Activated CD4-positive, alpha-beta T cell treated with anti-CD3 and anti-CD28 coated beads, Interleukin-2, amount 10 ng/mL, durations not matched to agents 24 days and 14 days (primary cell): ENCODE measurements at regions of chr21 and their contacts with region 1.

Region 1: GRCh38 chr21:45643021-45643980 is at the start of gene PCBP3:
- DNase-seq: peak; percentile 98
- H3K4me3 Mint-ChIP-seq: peak within 1 kb of the TSS; percentile 82
- H3K27ac Mint-ChIP-seq: peak within 1 kb of the TSS; percentile 64
- H3K4me1 Mint-ChIP-seq: peaks cover 16% of the 10 kb centered on the region
- H3K27me3 Mint-ChIP-seq: peaks cover 11% of the 10 kb centered on the region
- total RNA-seq, gene PCBP3: 7.5 and 9.7 TPM in 2 replicates

Region 2: DNA sequence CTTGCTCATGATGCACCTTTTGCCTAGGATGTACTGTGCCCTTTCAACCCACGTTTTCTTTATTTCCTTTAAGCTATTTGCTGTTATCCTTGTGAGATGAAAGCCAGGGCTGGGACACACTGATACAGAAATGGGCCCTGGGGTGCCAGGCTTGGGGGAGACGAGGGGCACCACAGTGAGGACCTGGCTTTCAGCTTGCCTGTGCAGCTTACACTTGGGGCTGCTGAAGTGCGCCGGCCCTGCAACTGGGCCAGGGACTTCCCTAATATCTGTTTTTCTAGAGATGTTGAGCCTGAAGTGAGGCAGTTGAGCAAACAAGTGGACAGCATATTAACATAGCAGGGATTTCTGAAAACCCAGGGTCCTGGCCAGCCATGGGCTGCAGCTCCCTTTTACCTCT is 58.5 kb before region 1 on chr21:
- intact Hi-C with region 1: no loop called
- DNase-seq: no peak
- H3K4me3 Mint-ChIP-seq: no peak overlapping the region
- H3K27ac Mint-ChIP-seq: no peak overlapping the region
- H3K4me1 Mint-ChIP-seq: no peaks in the 10 kb centered on the region
- H3K27me3 Mint-ChIP-seq: peaks cover 25% of the 10 kb centered on the region

Region 3: DNA sequence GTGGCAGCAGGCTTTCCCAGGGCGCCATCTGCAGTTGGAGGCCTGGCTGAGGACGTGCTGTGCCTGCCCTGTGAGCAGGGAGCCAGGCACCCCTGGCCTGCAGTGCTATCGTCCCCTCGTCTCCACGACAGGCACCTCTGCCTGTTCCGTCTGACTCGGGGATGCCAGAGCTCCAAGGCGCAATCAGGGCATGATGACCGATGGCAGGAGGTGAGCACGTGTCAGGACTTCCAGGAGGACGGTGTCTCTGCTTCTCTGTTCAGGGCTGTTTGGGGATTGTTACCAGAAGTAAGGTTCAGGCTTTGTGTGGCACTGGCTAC is 125.4 kb after region 1 on chr21:
- intact Hi-C with region 1: loop called (anchors 1 kb)
- DNase-seq: peak; percentile 71
- H3K4me3 Mint-ChIP-seq: peak overlapping the region; percentile 63
- H3K27ac Mint-ChIP-seq: peak overlapping the region; percentile 92
- H3K4me1 Mint-ChIP-seq: peaks cover 43% of the 10 kb centered on the region
- H3K27me3 Mint-ChIP-seq: no peaks in the 10 kb centered on the region

Region 4: GRCh38 chr21:45809421-45809820 is 166.1 kb after region 1 on chr21:
- intact Hi-C with region 1: no loop called
- DNase-seq: no peak
- H3K4me3 Mint-ChIP-seq: no peak overlapping the region
- H3K27ac Mint-ChIP-seq: no peak overlapping the region
- H3K4me1 Mint-ChIP-seq: no peaks in the 10 kb centered on the region
- H3K27me3 Mint-ChIP-seq: peaks cover 3% of the 10 kb centered on the region